Naive thymus-derived CD8-positive, alpha-beta T cell (primary cell): ENCODE measurements at regions of chr17 and their contacts with region 1.

Region 1: GRCh38 chr17:82518826-82519810 is at the start of gene FOXK2:
- DNase-seq: peak; percentile 90 to 97 (median 95)
- ATAC-seq: peak; percentile 95 to 98
- H3K4me3 Mint-ChIP-seq: peak within 1 kb of the TSS; percentile 84 to 97 (median 89)
- H3K27ac Mint-ChIP-seq: peak within 1 kb of the TSS; percentile 26 to 95 (median 90)
- H3K4me1 Mint-ChIP-seq: peaks cover 15 to 26% (median 24%) of the 10 kb centered on the region in 4 donors
- H3K27me3 Mint-ChIP-seq: no peaks in the 10 kb centered on the region
- polyA plus RNA-seq, gene FOXK2: 3.2 to 5.7 (median 4.3) TPM

Region 2: GRCh38 chr17:82494236-82495055 is 24.7 kb before region 1 on chr17:
- POLR2A ChIA-PET with region 1: interaction called, 42 read pairs
- DNase-seq: peak; percentile 68 to 93 (median 88)
- ATAC-seq: peak; percentile 58 to 75
- H3K4me3 Mint-ChIP-seq: peak overlapping the region in 9 of 10 donors; percentile 44 to 86 (median 67)
- H3K27ac Mint-ChIP-seq: peak overlapping the region; percentile 55 to 98 (median 89)
- H3K4me1 Mint-ChIP-seq: peaks cover 10 to 29% (median 25%) of the 10 kb centered on the region in 4 donors
- H3K27me3 Mint-ChIP-seq: no peaks in the 10 kb centered on the region